ENCODE measurements at regions of chr12 and their contacts with region 1.

Region 1: GRCh38 chr12:105330283-105330930 is at the start of gene C12orf75:
- DNase-seq: peak; percentile 92
- ATAC-seq: peak; percentile 92
- H3K4me3 Mint-ChIP-seq: peak within 1 kb of the TSS; percentile 78
- H3K27ac Mint-ChIP-seq: peak within 1 kb of the TSS; percentile 80
- H3K4me1 Mint-ChIP-seq: peaks cover 39% of the 10 kb centered on the region
- H3K27me3 Mint-ChIP-seq: no peaks in the 10 kb centered on the region
- total RNA-seq, gene C12orf75: 53.8 to 59.9 TPM

Region 2: DNA sequence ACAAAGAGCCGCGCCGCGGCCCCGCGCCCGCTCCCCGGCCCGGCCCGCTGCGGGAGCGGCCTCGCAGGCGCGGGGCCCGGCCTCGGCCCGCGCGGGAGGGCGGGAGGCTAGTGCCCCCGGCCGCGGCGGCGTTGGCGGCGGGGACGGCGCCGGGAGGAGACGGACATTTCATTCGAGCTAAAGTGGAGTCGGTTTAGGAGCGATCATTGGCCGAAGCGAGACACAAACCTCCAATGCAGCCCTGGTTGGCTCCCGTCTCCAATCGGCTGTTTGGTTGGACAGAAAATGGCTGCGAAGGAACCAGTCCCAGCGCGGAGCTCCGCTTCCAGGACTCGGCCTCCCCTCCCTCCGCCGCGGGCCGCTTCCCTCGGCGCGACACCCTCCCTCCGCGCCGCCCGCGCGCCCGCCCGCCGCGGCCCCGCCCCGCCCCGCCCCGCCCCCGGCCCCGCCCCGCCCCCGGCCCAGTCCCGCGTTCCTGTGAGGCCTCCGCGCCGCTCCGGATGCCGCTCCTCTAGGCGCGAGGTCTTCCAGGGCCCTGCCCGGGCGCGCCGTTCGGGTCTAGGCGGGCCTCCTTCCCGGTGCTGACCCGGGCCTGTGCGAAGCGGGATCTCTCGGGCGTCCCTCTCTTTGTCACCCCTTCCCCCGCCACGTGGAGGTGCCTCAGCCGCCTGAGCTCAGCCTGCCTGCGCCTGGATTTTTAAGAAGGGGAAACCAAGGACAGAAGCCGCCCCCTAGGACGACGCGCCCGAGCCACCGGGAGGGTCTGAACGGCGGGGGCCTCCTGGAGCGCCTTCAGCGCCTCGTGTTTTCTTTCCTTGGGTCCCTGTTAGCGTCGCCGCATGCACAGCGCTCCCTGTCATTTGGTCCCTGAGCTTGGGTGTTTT is 1192.3 kb before region 1 on chr12 and contains the start of gene NFYB:
- CTCF ChIA-PET with region 1: no interaction called
- POLR2A ChIA-PET with region 1: no interaction called
- intact Hi-C with region 1: loop called in 1 of 2 experiments (anchors 5 kb)
- DNase-seq: peak; percentile 95
- ATAC-seq: peak; percentile 98
- H3K4me3 Mint-ChIP-seq: peak within 1 kb of the TSS; percentile 83
- H3K27ac Mint-ChIP-seq: peak within 1 kb of the TSS; percentile 90
- H3K4me1 Mint-ChIP-seq: peaks cover 19% of the 10 kb centered on the region
- H3K27me3 Mint-ChIP-seq: no peaks in the 10 kb centered on the region
- total RNA-seq, gene NFYB: 18.8 to 27.2 TPM

Region 3: GRCh38 chr12:104286538-104287482 is 1043.6 kb before region 1 on chr12:
- CTCF ChIA-PET with region 1: no interaction called
- POLR2A ChIA-PET with region 1: no interaction called
- intact Hi-C with region 1: loop called in 1 of 2 experiments (anchors 5 kb)
- DNase-seq: peak; percentile 95
- ATAC-seq: peak; percentile 84
- H3K4me3 Mint-ChIP-seq: peak overlapping the region; percentile 95
- H3K27ac Mint-ChIP-seq: peak overlapping the region; percentile 97
- H3K4me1 Mint-ChIP-seq: peaks cover 12% of the 10 kb centered on the region
- H3K27me3 Mint-ChIP-seq: no peaks in the 10 kb centered on the region

Region 4: DNA sequence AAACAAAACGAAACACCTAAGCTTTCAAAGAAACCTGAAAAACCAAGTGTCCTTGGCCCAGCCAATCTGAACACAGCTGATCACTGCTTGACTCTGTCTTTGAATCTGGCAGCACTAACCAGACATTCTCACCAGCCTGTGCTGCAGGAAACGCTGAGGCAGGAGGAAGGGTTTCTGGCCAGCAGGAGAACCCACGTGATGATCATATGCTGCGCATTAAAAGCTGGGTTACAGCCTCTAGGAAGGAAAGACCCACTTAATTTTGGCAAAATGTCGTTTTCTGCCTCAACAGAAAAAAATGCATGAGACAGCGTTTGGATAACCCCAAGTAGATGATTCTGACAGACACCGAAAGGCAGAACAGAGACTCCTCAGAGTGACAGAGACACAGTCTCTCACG is 104.2 kb before region 1 on chr12:
- CTCF ChIA-PET with region 1: interaction called, 3 read pairs
- POLR2A ChIA-PET with region 1: no interaction called
- intact Hi-C with region 1: loop called in 1 of 2 experiments (anchors 2 kb)
- DNase-seq: peak; percentile 49
- ATAC-seq: peak; percentile 69
- H3K4me3 Mint-ChIP-seq: no peak overlapping the region
- H3K27ac Mint-ChIP-seq: no peak overlapping the region
- H3K4me1 Mint-ChIP-seq: peaks cover 61% of the 10 kb centered on the region
- H3K27me3 Mint-ChIP-seq: no peaks in the 10 kb centered on the region

Region 5: DNA sequence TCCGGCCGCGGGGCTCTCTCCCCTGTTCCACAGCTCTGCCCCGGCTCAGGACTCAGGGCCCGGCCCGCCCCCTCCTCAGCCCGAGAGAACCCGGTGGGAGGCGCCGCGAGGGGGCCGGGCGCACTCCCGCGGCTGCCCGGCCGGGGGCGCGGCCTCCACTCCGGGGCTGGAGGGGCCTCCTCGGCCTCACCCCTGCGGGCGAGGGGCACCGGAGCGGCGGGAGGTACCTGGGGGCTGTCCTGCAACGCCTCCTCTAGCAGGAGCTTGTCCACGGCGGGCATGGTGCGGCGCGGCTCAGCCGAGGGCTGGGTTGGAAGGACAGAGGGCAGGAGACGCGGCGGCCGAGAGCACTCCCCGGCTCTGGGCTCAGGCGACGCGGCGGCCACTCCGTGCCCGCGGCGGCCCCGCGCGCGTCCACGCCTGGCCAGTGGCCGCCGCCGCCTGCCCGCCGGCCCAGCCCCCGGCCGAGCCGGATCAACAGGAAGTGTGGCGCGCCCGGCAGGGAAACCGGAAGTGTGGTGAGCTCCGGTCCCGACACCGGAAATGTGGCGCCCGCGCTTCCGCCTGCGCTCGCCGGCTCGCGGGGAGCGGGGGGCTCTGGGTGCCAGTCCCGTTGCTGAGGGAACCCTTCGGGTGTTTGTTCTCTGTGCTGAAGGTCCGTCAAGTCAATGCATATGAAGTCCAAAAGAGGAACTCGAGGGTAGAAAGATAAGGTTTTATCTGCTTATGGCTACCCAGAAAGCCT is 94.5 kb before region 1 on chr12 and contains the start of gene APPL2:
- CTCF ChIA-PET with region 1: no interaction called
- POLR2A ChIA-PET with region 1: no interaction called
- intact Hi-C with region 1: loop called in 1 of 2 experiments (anchors 1 kb)
- DNase-seq: peak; percentile 87
- ATAC-seq: peak; percentile 84
- H3K4me3 Mint-ChIP-seq: peak within 1 kb of the TSS; percentile 85
- H3K27ac Mint-ChIP-seq: peak within 1 kb of the TSS; percentile 86
- H3K4me1 Mint-ChIP-seq: peaks cover 41% of the 10 kb centered on the region
- H3K27me3 Mint-ChIP-seq: no peaks in the 10 kb centered on the region
- total RNA-seq, gene APPL2: 13.9 to 17.2 TPM

Region 6: GRCh38 chr12:106302401-106303201 is 972.2 kb after region 1 on chr12 and contains the start of gene TCP11L2:
- CTCF ChIA-PET with region 1: no interaction called
- POLR2A ChIA-PET with region 1: no interaction called
- intact Hi-C with region 1: loop called in 1 of 2 experiments (anchors 5 kb)
- DNase-seq: peak; percentile 94
- ATAC-seq: peak; percentile 67
- H3K4me3 Mint-ChIP-seq: peak within 1 kb of the TSS; percentile 78
- H3K27ac Mint-ChIP-seq: peak within 1 kb of the TSS; percentile 99
- H3K4me1 Mint-ChIP-seq: peaks cover 59% of the 10 kb centered on the region
- H3K27me3 Mint-ChIP-seq: no peaks in the 10 kb centered on the region
- total RNA-seq, gene TCP11L2: 8.6 to 11.8 TPM

Region 7: DNA sequence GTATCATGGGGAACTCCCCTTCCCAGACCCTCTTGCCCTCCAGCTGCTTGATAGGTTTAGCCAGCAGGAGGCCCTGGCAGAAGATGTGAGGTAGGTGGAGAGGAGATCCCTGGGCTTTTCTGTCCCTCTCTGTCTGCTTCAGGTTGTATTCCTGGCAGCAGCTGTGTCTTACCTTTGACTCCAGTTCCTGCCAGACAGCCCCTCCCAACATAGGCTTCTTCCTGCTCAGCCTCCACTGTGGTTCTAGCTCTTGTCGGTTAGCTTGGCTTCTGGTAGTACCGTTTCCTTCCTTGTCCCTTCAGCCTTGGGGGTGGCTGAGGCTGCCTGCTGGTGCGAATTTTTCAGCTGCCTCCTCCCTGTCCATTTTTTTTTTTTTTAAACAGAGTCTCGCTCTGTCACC is 1978.6 kb after region 1 on chr12:
- CTCF ChIA-PET with region 1: no interaction called
- POLR2A ChIA-PET with region 1: no interaction called
- intact Hi-C with region 1: no loop called
- DNase-seq: no peak
- ATAC-seq: peak; percentile 63
- H3K4me3 Mint-ChIP-seq: no peak overlapping the region
- H3K27ac Mint-ChIP-seq: no peak overlapping the region
- H3K4me1 Mint-ChIP-seq: peaks cover 14% of the 10 kb centered on the region
- H3K27me3 Mint-ChIP-seq: no peaks in the 10 kb centered on the region